ENCODE measurements at regions of chr15 and their contacts with region 1.

Region 1: GRCh38 chr15:60916679-60917460 is 312.2 kb downstream of the RORA start:
- DNase-seq: peak; percentile 77 to 85
- ATAC-seq: peak; percentile 85

Region 2: DNA sequence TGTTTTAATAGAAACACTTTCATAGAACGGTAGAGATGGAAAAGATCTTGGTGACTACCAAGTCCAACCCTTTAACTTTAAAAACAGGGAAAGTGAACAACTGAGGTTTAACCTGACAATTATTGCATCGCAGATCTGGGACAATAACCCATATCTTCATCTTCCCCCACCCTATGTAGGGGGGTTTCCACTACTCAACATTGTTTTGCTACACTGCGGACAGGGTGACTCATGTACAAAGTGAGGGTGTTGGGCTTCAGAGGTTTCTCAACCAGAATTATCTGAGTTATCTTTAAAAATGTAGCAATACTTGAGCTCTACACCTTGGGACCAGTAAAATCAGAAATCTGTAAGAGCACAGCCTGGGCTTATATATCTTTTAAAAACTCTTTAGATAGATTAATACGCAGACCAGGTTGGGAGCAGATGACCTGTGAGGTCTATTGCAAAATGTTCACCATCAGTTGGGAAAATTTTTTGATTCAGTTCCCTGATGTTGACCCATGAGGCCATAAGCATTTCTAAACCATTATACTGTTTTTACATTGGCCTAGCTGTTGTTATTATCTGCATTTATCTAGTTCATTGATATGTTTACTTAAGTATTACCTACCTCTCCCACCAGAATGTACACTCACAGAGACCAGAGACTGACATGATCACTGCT is 334.4 kb before region 1 on chr15:
- intact Hi-C with region 1: loop called in 1 of 2 experiments (anchors 5 kb)
- DNase-seq: no peak
- ATAC-seq: no peak

Measured in left colon (tissue), 2 donors.